Gastrocnemius medialis (tissue), 4 donors: ENCODE measurements at regions of chr2 and their contacts with region 1.

Region 1: GRCh38 chr2:1047485-1047884 is 96.8 kb downstream of the SNTG2 start:
- DNase-seq: no peak
- ATAC-seq: no peak
- H3K4me3 ChIP-seq: no peak overlapping the region
- H3K27ac ChIP-seq: no peak overlapping the region
- H3K4me1 ChIP-seq: no peaks in the 10 kb centered on the region
- H3K27me3 ChIP-seq: no peaks in the 10 kb centered on the region
- CTCF ChIP-seq: no peak
- POLR2A ChIP-seq: no peak

Region 2: DNA sequence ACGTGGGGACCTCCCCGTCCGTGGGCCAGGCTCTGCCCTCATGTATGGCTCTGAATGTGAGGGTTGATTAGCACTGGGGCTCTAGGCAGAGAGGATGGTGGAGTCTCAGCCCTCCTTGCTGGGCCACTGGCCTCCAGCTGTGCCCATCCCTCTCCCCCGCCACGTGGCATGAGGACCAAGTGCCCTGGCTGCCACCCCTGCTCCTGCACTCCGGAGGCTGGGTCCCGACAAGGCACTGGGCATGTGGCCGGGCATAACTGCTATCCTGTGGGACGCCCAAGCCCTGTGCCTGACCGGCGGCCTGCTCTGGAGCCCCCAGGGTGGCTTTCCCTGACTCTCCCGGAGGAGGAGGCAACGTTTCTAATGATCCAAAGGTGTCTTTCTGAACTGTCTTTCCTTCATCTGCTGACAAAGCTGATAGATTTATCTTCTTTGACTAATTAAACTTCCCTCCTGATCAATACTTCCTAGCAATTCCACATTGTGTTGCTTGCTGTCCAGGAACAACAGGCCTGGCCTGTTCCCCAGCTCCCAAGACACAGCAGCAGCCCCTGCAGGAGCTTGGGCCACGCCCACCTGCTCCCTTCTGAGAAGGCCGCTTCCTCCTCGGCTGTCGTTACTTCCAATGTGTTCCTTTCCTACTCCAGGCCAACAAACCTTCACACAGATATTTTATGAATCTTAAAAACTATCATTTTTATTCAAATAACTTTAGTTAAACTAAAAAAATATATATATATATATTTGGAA is 35.1 kb after region 1 on chr2:
- in situ Hi-C with region 1: no loop called
- intact Hi-C with region 1: loop called (anchors 1 kb)
- DNase-seq: no peak
- ATAC-seq: no peak
- H3K4me3 ChIP-seq: no peak overlapping the region
- H3K27ac ChIP-seq: no peak overlapping the region
- H3K4me1 ChIP-seq: no peaks in the 10 kb centered on the region
- H3K27me3 ChIP-seq: no peaks in the 10 kb centered on the region
- CTCF ChIP-seq: no peak
- POLR2A ChIP-seq: no peak